HCT116 (cell line): ENCODE measurements at regions of chr19 and their contacts with region 1.

Region 1: GRCh38 chr19:6021878-6022569 is 44.1 kb upstream of the RANBP3 start:
- DNase-seq: peak; percentile 47
- ATAC-seq: peak; percentile 98
- H3K4me3 ChIP-seq: no peak overlapping the region
- H3K27ac ChIP-seq: no peak overlapping the region
- H3K4me1 ChIP-seq: peaks cover 0 to 6% of the 10 kb centered on the region in 2 experiments; a peak in 1 of 4 replicates
- H3K27me3 ChIP-seq: no peaks in the 10 kb centered on the region
- CTCF ChIP-seq: peak; percentile 74 to 85 (median 82)
- POLR2A ChIP-seq: no peak
- RAD21 ChIP-seq: peak; percentile 88

Region 2: DNA sequence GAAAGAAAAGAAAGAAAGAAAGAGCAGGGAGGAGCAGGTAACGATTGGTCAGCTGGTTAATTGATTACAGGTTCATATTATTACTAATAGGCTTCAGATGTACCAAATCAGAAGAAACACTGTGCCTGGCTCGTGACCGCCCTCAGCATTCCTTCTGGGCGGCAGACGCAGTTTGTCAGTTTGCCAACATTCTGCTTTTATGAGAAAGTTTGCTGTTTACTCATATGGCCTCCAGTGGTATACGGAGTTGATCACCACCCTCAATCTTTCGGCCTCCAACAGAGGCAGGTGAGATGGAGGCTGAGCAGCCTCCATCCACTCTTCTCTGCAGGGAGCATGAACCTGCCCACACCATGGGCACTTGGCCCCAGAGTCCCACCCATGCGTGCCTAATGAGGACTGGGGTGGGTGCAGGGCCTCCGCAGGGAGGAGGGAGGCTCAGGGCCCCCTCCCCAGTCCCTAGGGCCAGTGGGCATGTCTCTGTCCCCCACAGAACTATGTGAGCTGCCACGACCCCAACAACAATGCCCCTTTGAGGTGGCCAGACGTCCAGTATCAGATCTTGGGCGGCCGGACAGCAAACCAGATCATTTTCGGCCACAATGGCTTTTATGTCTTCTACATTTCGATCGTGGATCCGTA is 246.2 kb before region 1 on chr19:
- CTCF ChIA-PET with region 1: interaction called, 7 read pairs
- POLR2A ChIA-PET with region 1: no interaction called
- RAD21 ChIA-PET with region 1: no interaction called
- intact Hi-C with region 1: loop called (anchors 1 kb)
- DNase-seq: no peak
- ATAC-seq: no peak
- H3K4me3 ChIP-seq: no peak overlapping the region
- H3K27ac ChIP-seq: no peak overlapping the region
- H3K4me1 ChIP-seq: peaks cover 0 to 11% of the 10 kb centered on the region in 2 experiments; a peak in 3 of 4 replicates
- H3K27me3 ChIP-seq: no peaks in the 10 kb centered on the region
- CTCF ChIP-seq: no peak
- POLR2A ChIP-seq: no peak
- RAD21 ChIP-seq: no peak

Region 3: GRCh38 chr19:5967994-5968430 is 54.0 kb before region 1 on chr19:
- CTCF ChIA-PET with region 1: interaction called, 21 read pairs
- POLR2A ChIA-PET with region 1: no interaction called
- RAD21 ChIA-PET with region 1: interaction called in 1 of 2 experiments, 3 read pairs
- intact Hi-C with region 1: no loop called
- DNase-seq: peak; percentile 50
- ATAC-seq: peak; percentile 88
- H3K4me3 ChIP-seq: no peak overlapping the region
- H3K27ac ChIP-seq: peak overlapping the region; percentile 45
- H3K4me1 ChIP-seq: peaks cover 0 to 12% of the 10 kb centered on the region in 2 experiments; a peak in 2 of 4 replicates
- H3K27me3 ChIP-seq: no peaks in the 10 kb centered on the region
- CTCF ChIP-seq: peak; percentile 56 to 89 (median 86)
- POLR2A ChIP-seq: no peak
- RAD21 ChIP-seq: peak; percentile 63

Region 4: DNA sequence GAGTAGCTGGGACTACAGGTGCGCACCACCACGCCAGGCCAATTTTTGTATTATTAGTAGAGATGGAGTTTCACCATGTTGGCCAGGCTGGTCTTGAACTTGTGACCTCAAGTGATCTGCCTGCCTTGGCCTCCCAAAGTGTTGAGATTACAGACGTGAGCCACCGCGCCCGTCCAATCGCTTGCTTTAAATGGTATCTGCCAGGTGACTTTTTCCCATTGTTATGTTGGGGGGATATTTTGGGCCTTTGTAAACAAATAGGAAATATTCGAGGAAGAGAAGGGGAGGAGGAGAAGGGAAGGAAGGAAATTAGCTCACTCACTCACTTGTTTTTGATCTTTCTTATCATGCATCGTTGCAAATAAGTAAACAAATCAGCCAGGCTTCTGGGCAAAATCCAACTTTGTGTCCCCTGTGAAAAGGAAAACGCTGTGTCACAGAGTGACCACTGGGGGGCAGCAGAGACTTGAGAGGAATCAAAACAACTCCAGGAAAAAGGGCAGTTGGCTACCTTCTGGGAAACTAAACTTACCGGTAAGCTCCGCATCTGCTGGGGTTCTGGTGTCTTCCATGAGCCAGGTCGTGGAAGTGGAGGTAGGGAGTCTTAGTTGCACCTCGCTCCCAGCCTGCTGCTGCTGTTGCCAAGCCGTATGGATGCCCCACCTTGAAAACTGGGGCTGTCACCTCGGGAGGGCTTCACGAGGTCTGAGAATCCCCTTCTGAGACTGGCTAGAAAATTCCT is 34.8 kb before region 1 on chr19:
- CTCF ChIA-PET with region 1: interaction called, 15 read pairs
- POLR2A ChIA-PET with region 1: no interaction called
- RAD21 ChIA-PET with region 1: interaction called in 1 of 2 experiments, 6 read pairs
- intact Hi-C with region 1: loop called (anchors 1 kb)
- DNase-seq: peak; percentile 60
- ATAC-seq: peak; percentile 61
- H3K4me3 ChIP-seq: no peak overlapping the region
- H3K27ac ChIP-seq: no peak overlapping the region
- H3K4me1 ChIP-seq: peaks cover 0 to 19% of the 10 kb centered on the region in 2 experiments; a peak in 2 of 4 replicates
- H3K27me3 ChIP-seq: no peaks in the 10 kb centered on the region
- CTCF ChIP-seq: peak; percentile 88 to 94 (median 93); a peak in 5 of 6 replicates
- POLR2A ChIP-seq: no peak
- RAD21 ChIP-seq: peak; percentile 85

Region 5: GRCh38 chr19:6110360-6110977 is 88.4 kb after region 1 on chr19 and contains the start of gene RFX2:
- CTCF ChIA-PET with region 1: no interaction called
- POLR2A ChIA-PET with region 1: no interaction called
- RAD21 ChIA-PET with region 1: no interaction called
- intact Hi-C with region 1: no loop called
- DNase-seq: peak; percentile 97
- ATAC-seq: peak; percentile 97
- H3K4me3 ChIP-seq: peak within 1 kb of the TSS; percentile 69 to 76
- H3K27ac ChIP-seq: no peak within 1 kb of the TSS; the same call in 1 of the 2 replicates
- H3K4me1 ChIP-seq: peaks cover 6 to 14% of the 10 kb centered on the region in 2 experiments; a peak in 3 of 4 replicates
- H3K27me3 ChIP-seq: no peaks in the 10 kb centered on the region
- CTCF ChIP-seq: no peak
- POLR2A ChIP-seq: no peak
- RAD21 ChIP-seq: no peak
- total RNA-seq, gene RFX2: 13.7 TPM

Region 6: GRCh38 chr19:6685962-6686627 is 664.1 kb after region 1 on chr19:
- CTCF ChIA-PET with region 1: no interaction called
- POLR2A ChIA-PET with region 1: no interaction called
- RAD21 ChIA-PET with region 1: no interaction called
- intact Hi-C with region 1: no loop called
- DNase-seq: no peak
- ATAC-seq: no peak
- H3K4me3 ChIP-seq: no peak overlapping the region
- H3K27ac ChIP-seq: no peak overlapping the region
- H3K4me1 ChIP-seq: peaks cover 5 to 17% of the 10 kb centered on the region in 2 experiments
- H3K27me3 ChIP-seq: no peaks in the 10 kb centered on the region
- CTCF ChIP-seq: no peak
- POLR2A ChIP-seq: no peak
- RAD21 ChIP-seq: no peak